BJ (cell line): ENCODE measurements at regions of chr2 and their contacts with region 1.

Region 1: GRCh38 chr2:15169326-15170069 is 391.6 kb downstream of the NBAS start:
- DNase-seq: peak; percentile 83
- H3K4me3 ChIP-seq: 0 out of 2 replicates have a peak overlapping the region, but pooled peaks have one; percentile 1
- H3K27me3 ChIP-seq: no peaks in the 10 kb centered on the region
- CTCF ChIP-seq: no peak

Region 2: DNA sequence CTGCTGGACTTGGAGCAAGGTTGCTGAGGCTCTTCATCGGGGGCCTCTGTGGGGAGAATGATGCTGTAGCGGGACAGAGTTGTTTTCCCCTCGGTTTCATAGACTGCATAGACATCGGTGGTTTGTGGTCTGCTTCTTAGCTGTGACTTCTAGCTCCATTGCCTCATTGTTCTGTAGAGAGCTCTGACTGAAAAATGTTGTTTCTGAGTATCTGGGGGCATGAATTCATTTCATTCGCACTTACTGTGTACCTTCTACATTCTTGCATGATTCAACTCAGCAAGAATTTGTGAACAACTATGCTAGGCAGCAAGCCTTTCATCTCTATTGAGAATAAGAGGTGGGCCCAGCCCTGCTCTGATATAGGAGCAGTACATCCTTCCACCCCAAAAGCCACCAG is 15.2 kb before region 1 on chr2:
- CTCF ChIA-PET with region 1: no interaction called
- POLR2A ChIA-PET with region 1: no interaction called
- DNase-seq: no peak
- H3K4me3 ChIP-seq: no peak overlapping the region
- H3K27me3 ChIP-seq: no peaks in the 10 kb centered on the region
- CTCF ChIP-seq: no peak

Region 3: GRCh38 chr2:16487686-16488085 is 1318.2 kb after region 1 on chr2:
- CTCF ChIA-PET with region 1: interaction called, 10 read pairs
- POLR2A ChIA-PET with region 1: no interaction called
- DNase-seq: no peak
- H3K4me3 ChIP-seq: no peak overlapping the region
- H3K27me3 ChIP-seq: no peaks in the 10 kb centered on the region
- CTCF ChIP-seq: no peak